ENCODE measurements at regions of chr19 and their contacts with region 1.

Region 1: DNA sequence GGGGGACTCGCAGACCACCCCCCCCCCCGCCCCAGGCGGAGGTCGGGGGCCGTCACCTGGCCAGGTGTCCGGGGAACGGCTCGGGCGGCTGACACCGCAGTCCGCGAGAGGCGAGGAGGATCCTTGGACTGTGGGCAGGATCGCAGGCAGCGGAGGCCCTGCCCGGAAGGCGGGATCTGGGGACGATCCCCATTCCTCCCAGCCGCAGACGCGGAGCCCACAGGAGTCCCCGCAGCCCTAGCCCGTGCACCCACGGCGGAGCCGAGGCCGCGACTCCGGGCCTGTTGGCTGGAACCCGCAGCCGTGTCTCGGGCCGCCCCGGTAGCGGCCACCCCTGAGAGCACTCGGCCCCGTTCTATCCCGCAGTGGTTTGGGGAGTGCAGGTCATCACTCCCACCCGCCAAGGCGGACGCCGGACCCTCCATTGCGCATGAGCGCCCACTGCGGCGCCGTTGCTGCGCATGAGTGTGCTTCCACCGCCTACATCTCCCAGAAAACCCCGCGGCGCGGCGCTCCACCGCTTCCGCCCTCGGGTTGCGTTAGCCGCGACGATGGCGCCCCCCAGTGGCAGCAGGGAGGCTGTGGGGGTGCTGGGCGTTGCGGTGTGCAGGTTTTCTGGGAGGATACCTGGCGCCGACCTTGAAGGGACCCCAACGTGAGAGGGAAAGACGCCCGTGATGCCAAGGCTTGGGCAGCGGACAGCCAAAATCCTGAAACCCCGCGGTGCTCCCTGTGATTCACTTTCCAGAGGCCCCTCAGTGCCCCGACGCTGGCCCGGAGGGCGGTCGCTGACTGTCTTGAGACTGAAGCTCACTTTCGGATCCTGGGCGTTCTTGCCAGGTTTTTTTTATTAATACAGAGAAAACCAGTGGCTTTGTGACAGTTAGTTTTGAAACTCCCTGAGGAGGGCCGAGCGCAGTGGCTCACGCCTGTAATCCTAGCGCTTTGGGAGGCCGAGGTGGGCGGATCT is 4.4 kb upstream of the ZNF329 start:
- DNase-seq: peak; percentile 91
- H3K4me3 Mint-ChIP-seq: peak overlapping the region; percentile 72
- H3K27ac Mint-ChIP-seq: no peak overlapping the region
- H3K4me1 Mint-ChIP-seq: peaks cover 2% of the 10 kb centered on the region
- H3K27me3 Mint-ChIP-seq: no peaks in the 10 kb centered on the region

Region 2: GRCh38 chr19:56393119-56394012 is 1761.6 kb before region 1 on chr19 and contains the start of gene ZNF582:
- intact Hi-C with region 1: loop called (anchors 10 kb)
- DNase-seq: peak; percentile 85
- H3K4me3 Mint-ChIP-seq: peak within 1 kb of the TSS; percentile 85
- H3K27ac Mint-ChIP-seq: peak within 1 kb of the TSS; percentile 85
- H3K4me1 Mint-ChIP-seq: peaks cover 3% of the 10 kb centered on the region
- H3K27me3 Mint-ChIP-seq: no peaks in the 10 kb centered on the region
- total RNA-seq, gene ZNF582: 1.3 and 1.4 TPM in 2 replicates

Region 3: GRCh38 chr19:57410877-57411671 is 743.9 kb before region 1 on chr19 and contains the start of gene ZNF17:
- intact Hi-C with region 1: loop called (anchors 10 kb)
- DNase-seq: peak; percentile 88
- H3K4me3 Mint-ChIP-seq: peak within 1 kb of the TSS; percentile 92
- H3K27ac Mint-ChIP-seq: peak within 1 kb of the TSS; percentile 63
- H3K4me1 Mint-ChIP-seq: peaks cover 11% of the 10 kb centered on the region
- H3K27me3 Mint-ChIP-seq: no peaks in the 10 kb centered on the region
- total RNA-seq, gene ZNF17: 7.7 and 9.3 TPM in 2 replicates

Region 4: DNA sequence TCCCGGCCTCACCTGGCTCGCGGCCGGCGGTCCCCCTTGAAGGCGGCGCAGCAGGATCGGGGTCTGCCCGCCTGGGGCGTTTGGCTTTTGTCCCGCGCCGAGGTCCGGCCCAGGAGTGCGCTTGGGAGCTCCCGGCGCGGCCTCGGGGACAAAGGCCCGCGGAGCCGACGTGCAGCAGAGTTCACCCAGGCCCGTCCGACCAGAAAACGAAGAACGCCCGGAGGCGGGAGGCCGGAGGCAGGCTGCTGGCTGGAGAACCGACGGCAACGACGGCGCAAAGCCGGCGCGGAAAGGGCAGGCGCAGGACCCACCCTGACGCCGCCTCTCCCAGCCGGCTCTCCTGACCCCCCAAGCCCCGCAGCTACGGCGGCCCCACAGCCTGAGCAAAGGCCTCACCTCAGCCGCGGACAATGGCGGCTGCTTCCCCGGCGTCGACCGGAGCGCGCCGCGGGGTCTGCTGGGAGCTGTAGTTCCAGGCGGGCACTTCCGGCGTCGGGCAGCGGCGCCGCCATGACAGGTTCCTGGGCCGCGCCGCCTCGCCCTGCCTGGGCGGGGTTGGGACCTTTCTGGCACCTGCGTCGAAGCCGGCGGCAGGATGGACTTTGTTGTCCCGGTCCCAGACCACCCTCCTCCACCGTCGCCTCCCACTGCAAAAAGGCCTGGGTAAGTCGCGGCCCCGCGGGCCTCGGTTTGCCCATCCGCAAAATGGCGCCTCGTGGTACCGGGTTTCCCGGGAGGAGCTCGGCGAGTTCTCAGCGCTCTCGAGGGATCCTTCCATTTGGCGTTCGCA is 152.4 kb before region 1 on chr19 and contains the start of gene ZNF606:
- intact Hi-C with region 1: loop called (anchors 2 kb)
- DNase-seq: peak; percentile 80
- H3K4me3 Mint-ChIP-seq: peak within 1 kb of the TSS; percentile 80
- H3K27ac Mint-ChIP-seq: peak within 1 kb of the TSS; percentile 73
- H3K4me1 Mint-ChIP-seq: peaks cover 12% of the 10 kb centered on the region
- H3K27me3 Mint-ChIP-seq: no peaks in the 10 kb centered on the region
- total RNA-seq, gene ZNF606: 6.3 and 6.4 TPM in 2 replicates

Measured in activated T-helper 2 cell treated with anti-CD3 and anti-CD28 coated beads, Interferon-gamma antibody, Interleukin-2, Interleukin-4, amounts not matched to agents 10 μg/mL and 5 μg/mL and 100 μg/mL, durations not matched to agents 14 hours and 24 hours and 36 hours (primary cell).